CD8-positive, alpha-beta T cell (primary cell): ENCODE measurements at regions of chr1 and their contacts with region 1.

Region 1: GRCh38 chr1:24762133-24762676 is 17.0 kb downstream of the CLIC4 start:
- DNase-seq: no peak
- ATAC-seq: no peak
- H3K4me3 ChIP-seq: no peak overlapping the region
- H3K4me3 Mint-ChIP-seq: no peak overlapping the region
- H3K27ac ChIP-seq: no peak overlapping the region
- H3K27ac Mint-ChIP-seq: no peak overlapping the region
- H3K4me1 ChIP-seq: no peaks in the 10 kb centered on the region
- H3K4me1 Mint-ChIP-seq: no peaks in the 10 kb centered on the region
- H3K27me3 ChIP-seq: no peaks in the 10 kb centered on the region
- H3K27me3 Mint-ChIP-seq: no peaks in the 10 kb centered on the region
- CTCF ChIP-seq: no peak

Region 2: GRCh38 chr1:24619376-24619775 is 142.8 kb before region 1 on chr1:
- CTCF ChIA-PET with region 1: no interaction called
- POLR2A ChIA-PET with region 1: no interaction called
- intact Hi-C with region 1: no loop called
- DNase-seq: no peak
- ATAC-seq: no peak
- H3K4me3 ChIP-seq: no peak overlapping the region
- H3K4me3 Mint-ChIP-seq: no peak overlapping the region
- H3K27ac ChIP-seq: no peak overlapping the region
- H3K27ac Mint-ChIP-seq: no peak overlapping the region
- H3K4me1 ChIP-seq: no peaks in the 10 kb centered on the region
- H3K4me1 Mint-ChIP-seq: no peaks in the 10 kb centered on the region
- H3K27me3 ChIP-seq: peaks cover 0 to 2% of the 10 kb centered on the region in 2 experiments
- H3K27me3 Mint-ChIP-seq: peaks cover 19% of the 10 kb centered on the region
- CTCF ChIP-seq: no peak

Region 3: DNA sequence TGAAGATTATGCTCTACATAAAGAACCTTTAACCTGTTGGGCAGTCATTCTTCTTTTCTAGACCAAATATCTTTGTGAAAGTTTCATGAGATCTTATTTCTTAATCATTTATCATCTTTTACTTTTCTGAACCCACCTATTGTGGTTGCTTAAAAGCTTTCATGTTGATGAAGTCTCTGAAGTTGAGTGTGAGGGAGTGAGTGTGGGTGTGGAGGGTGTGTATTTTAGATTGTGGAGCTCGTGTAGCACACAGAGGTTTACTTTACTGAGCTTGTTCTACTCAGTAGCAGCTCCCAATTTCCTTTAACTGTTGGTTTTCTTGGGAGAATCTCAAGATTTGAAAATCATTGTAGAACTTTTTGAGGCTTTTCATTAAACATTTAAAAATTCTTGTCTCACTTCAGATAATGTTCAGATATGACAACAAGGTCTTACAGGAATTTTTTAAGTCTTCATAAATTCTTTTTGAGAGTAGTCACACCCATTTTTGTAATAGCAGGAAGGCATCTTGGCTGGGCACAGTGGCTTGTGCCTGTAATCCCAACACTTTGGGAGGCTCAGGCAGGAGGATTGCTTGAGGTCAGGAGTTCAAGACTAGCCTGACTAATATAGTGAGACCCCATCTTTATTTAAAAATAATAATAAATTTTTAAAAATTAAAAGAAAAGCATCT is 102.1 kb before region 1 on chr1:
- CTCF ChIA-PET with region 1: no interaction called
- POLR2A ChIA-PET with region 1: no interaction called
- intact Hi-C with region 1: no loop called
- DNase-seq: no peak
- ATAC-seq: no peak
- H3K4me3 ChIP-seq: no peak overlapping the region
- H3K4me3 Mint-ChIP-seq: no peak overlapping the region
- H3K27ac ChIP-seq: no peak overlapping the region
- H3K27ac Mint-ChIP-seq: peak overlapping the region; percentile 38
- H3K4me1 ChIP-seq: peaks cover 23% of the 10 kb centered on the region
- H3K4me1 Mint-ChIP-seq: peaks cover 32% of the 10 kb centered on the region
- H3K27me3 ChIP-seq: no peaks in the 10 kb centered on the region
- H3K27me3 Mint-ChIP-seq: no peaks in the 10 kb centered on the region
- CTCF ChIP-seq: no peak

Region 4: DNA sequence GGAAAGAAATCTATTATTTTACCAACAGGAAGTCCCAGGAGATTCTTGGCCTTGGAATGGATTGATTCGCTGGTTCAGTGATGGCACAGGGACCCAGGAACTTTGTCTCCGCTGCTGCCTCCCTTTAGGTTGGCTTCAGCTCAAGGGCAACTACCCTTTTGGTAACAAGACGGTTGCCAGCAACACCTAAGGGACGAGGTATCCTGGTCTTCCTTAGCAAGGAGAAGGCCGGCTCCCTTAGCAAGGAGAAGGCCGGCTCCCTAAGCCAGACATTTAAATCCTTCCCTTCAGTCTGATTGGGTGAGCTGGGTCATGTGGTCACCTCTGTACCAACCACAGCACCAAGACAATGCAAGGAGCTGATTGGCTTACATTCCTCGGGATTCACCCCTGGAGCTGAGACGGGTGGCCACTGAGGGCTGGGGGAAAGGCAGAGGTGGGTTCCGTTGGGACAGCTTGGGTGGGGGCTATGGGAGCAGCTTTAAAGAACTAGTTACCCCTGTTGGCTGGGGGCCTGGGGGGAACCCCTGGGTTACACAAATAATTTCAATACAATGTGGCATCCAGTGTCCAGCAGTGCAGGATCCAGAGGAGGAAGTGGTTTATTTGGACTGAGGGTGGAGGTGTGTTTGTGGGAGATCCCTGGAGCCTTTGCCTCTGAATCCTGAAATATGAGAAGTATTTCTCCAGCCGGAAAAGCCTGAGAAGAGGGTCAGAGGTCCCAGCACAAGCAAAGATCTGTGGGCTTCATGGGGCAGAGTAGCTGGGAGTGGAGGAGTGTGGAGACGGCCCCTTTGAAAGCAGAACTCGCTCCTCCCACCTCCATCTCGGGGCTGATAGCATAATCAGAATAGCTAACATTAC is 37.6 kb before region 1 on chr1:
- CTCF ChIA-PET with region 1: no interaction called
- POLR2A ChIA-PET with region 1: no interaction called
- intact Hi-C with region 1: loop called in 1 of 2 experiments (anchors 5 kb)
- DNase-seq: no peak
- ATAC-seq: no peak
- H3K4me3 ChIP-seq: no peak overlapping the region
- H3K4me3 Mint-ChIP-seq: no peak overlapping the region
- H3K27ac ChIP-seq: no peak overlapping the region
- H3K27ac Mint-ChIP-seq: no peak overlapping the region
- H3K4me1 ChIP-seq: no peaks in the 10 kb centered on the region
- H3K4me1 Mint-ChIP-seq: peaks cover 8% of the 10 kb centered on the region
- H3K27me3 ChIP-seq: no peaks in the 10 kb centered on the region
- H3K27me3 Mint-ChIP-seq: peaks cover 2% of the 10 kb centered on the region
- CTCF ChIP-seq: no peak

Region 5: DNA sequence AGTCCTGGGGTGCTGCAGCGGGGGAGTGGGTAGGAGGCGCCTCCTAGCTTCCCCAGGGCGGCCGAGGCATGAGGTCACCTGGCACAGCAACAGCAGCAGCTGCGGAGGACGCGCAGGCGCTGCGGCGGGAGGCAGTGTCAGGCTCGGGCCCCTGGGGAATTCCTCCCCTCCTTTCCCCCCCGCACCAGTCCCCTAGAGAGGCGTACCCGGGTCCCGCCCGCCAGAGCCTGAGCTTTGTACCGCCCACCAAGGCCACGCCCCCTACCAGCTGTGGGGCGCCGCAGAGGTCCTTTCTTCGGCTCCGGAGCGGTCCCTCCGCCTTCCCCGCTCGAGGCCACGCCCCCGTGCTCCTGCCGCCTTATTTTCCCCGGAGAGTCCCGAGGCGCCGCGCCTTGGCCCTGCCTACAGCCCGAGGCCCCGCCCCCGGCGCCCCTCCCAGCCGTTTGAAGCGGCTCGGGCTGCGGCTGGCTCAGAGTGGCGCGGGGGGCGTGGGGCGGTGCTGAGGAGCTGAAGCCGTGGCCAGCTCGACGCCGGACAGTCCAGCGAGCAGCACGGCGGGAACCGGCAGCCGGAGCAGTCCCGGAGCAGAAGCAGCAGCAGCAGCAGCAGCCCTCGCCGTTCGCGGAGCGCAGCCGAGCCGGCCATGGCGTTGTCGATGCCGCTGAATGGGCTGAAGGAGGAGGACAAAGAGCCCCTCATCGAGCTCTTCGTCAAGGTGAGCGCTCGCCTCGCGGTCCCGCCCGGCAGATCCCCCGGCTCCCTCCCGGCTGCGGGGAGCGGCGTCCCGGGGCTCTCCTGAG is 17.1 kb before region 1 on chr1 and contains the start of gene CLIC4:
- CTCF ChIA-PET with region 1: no interaction called
- POLR2A ChIA-PET with region 1: no interaction called
- intact Hi-C with region 1: no loop called
- DNase-seq: peak; percentile 97 to 100 (median 99)
- ATAC-seq: peak; percentile 92
- H3K4me3 ChIP-seq: peak within 1 kb of the TSS; percentile 52 to 54
- H3K4me3 Mint-ChIP-seq: peak within 1 kb of the TSS; percentile 86
- H3K27ac ChIP-seq: no peak within 1 kb of the TSS
- H3K27ac Mint-ChIP-seq: peak within 1 kb of the TSS; percentile 72
- H3K4me1 ChIP-seq: peaks cover 8% of the 10 kb centered on the region
- H3K4me1 Mint-ChIP-seq: peaks cover 27% of the 10 kb centered on the region
- H3K27me3 ChIP-seq: peaks cover 0 to 3% of the 10 kb centered on the region in 2 experiments
- H3K27me3 Mint-ChIP-seq: peaks cover 6% of the 10 kb centered on the region
- CTCF ChIP-seq: no peak
- total RNA-seq, gene CLIC4: 1.2 to 1.3 TPM

Region 6: DNA sequence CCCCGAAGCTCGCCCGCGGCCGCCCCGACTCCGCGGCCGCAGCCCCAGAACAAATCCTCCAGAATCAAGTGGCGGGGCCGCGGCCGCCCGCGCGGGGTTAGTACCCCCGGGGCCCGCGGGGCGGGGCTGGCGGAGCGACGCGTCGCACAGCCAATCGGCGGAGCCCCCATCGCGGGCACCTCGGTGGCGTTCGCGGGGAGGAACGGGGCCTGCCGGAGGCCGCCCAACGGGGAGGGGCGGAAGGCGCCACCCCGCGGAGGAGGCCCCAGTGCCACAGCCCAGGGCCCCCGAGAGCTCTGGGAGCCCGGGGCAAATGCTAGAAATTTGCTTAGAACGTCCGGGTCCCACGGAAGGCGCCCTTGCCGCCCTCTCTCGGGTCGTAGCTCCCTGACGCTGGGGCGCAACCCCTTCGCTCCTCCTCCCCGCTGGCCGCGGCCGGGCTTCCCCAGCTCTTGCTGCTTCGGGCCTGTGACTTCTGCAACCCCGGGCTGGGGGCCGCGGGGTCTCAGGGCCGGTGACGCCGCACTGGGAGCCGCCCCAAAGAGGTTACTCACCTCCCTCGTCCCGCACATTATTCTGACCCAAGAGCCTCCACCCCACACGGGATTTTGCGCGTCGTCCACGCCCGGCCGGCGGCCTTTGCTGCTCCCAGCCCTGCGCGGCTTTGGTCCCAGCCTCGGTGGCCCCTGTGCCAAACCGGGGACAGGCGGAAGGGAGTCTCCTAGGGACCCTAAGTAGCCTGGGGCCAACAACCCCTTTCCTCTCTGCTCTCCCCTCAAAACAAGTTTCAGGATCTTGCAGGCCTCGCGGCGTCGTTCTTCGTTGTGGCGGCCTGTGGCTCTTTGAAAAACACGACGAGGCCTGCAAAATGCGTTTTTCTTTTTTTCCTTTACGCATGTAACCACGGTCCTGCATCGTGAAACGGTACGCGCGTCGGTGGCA is 168.3 kb after region 1 on chr1 and contains the start of gene RUNX3:
- CTCF ChIA-PET with region 1: no interaction called
- POLR2A ChIA-PET with region 1: no interaction called
- intact Hi-C with region 1: no loop called
- DNase-seq: peak; percentile 87 to 98 (median 94)
- ATAC-seq: peak; percentile 77
- H3K4me3 ChIP-seq: peak within 1 kb of the TSS; percentile 89 to 97
- H3K4me3 Mint-ChIP-seq: peak within 1 kb of the TSS; percentile 93
- H3K27ac ChIP-seq: peak within 1 kb of the TSS; percentile 95 to 96
- H3K27ac Mint-ChIP-seq: peak within 1 kb of the TSS; percentile 99
- H3K4me1 ChIP-seq: peaks cover 49% of the 10 kb centered on the region
- H3K4me1 Mint-ChIP-seq: peaks cover 50% of the 10 kb centered on the region
- H3K27me3 ChIP-seq: no peaks in the 10 kb centered on the region
- H3K27me3 Mint-ChIP-seq: no peaks in the 10 kb centered on the region
- CTCF ChIP-seq: no peak
- total RNA-seq, gene RUNX3: 423 to 424 TPM